Dorsolateral prefrontal cortex (tissue), 120 donors: ENCODE measurements at regions of chr10 and their contacts with region 1.

Region 1: GRCh38 chr10:109883859-109884771 is 39.2 kb downstream of the XPNPEP1 start:
- DNase-seq: peak; percentile 37 to 81 (median 76)
- H3K4me3 ChIP-seq: peak overlapping the region; percentile 19 to 65 (median 50)
- H3K27ac ChIP-seq: peak overlapping the region; percentile 28 to 94 (median 85)
- H3K27me3 ChIP-seq: no peaks in the 10 kb centered on the region
- CTCF ChIP-seq: peak; percentile 81 to 99 (median 97)

Region 2: GRCh38 chr10:110007701-110008517 is 123.8 kb after region 1 on chr10 and contains the start of gene ADD3:
- intact Hi-C with region 1: loop called (anchors 5 kb)
- DNase-seq: peak; percentile 90 to 98 (median 94)
- H3K4me3 ChIP-seq: peak within 1 kb of the TSS; percentile 73 to 99 (median 94)
- H3K27ac ChIP-seq: peak within 1 kb of the TSS; percentile 84 to 99 (median 97)
- H3K27me3 ChIP-seq: no peaks in the 10 kb centered on the region
- CTCF ChIP-seq: peak in 8 of 56 donors; percentile 3 to 23 (median 12)
- total RNA-seq, gene ADD3: 171 to 457 (median 267) TPM

Region 3: GRCh38 chr10:110081911-110082310 is 197.8 kb after region 1 on chr10:
- intact Hi-C with region 1: loop called in 1 of 2 experiments (anchors 5 kb)
- DNase-seq: peak in 5 of 10 donors; percentile 44 to 74 (median 57)
- H3K4me3 ChIP-seq: peak overlapping the region in 11 of 59 donors; percentile 1 to 34 (median 15)
- H3K27ac ChIP-seq: peak overlapping the region; percentile 35 to 96 (median 88)
- H3K27me3 ChIP-seq: no peaks in the 10 kb centered on the region
- CTCF ChIP-seq: peak in 2 of 56 donors; percentile 9 to 10

Region 4: DNA sequence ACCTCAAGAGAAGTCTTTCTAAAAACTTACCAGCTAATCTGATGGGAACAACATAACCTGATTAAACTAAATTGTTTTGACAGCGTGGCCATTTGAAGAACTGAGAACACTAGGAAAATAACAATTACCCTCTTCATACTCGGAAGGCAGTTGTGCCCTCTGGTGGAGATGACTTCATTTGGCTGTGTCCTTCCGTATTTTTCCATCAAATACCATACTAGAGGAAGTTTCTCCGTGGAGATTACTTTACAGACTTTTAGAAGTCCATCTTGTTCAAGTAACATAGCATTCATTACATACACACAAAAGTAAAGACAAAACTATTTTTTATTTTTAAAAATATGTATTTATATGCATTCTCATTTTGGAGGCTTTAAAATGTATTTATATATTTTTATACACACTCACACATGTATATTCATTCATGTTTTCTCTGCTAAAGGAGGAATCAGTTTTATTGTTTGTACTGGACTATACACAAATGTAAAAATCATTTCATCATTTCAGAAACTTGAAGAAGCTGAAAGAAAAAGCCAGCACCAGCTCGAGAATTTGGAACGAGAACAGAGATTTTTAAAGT is 395.4 kb after region 1 on chr10:
- intact Hi-C with region 1: loop called in 1 of 2 experiments (anchors 5 kb)
- DNase-seq: peak in 5 of 10 donors; percentile 50 to 79 (median 60)
- H3K4me3 ChIP-seq: peak overlapping the region in 45 of 59 donors; percentile 1 to 53 (median 21)
- H3K27ac ChIP-seq: peak overlapping the region; percentile 12 to 99 (median 96)
- H3K27me3 ChIP-seq: no peaks in the 10 kb centered on the region
- CTCF ChIP-seq: peak; percentile 70 to 98 (median 89)

Region 5: GRCh38 chr10:110547139-110547761 is 663.1 kb after region 1 on chr10:
- intact Hi-C with region 1: loop called in 1 of 2 experiments (anchors 10 kb)
- DNase-seq: peak in 1 of 10 donors; percentile 14
- H3K4me3 ChIP-seq: peak overlapping the region in 1 of 59 donors; percentile 15
- H3K27ac ChIP-seq: peak overlapping the region in 31 of 59 donors; percentile 0 to 83 (median 52)
- H3K27me3 ChIP-seq: peaks cover 0 to 12% (median 0%) of the 10 kb centered on the region in 45 donors
- CTCF ChIP-seq: peak; percentile 78 to 94 (median 86)